ENCODE measurements at regions of chr5 and their contacts with region 1.

Region 1: GRCh38 chr5:75236322-75237316 is at the start of gene ANKRD31:
- DNase-seq: peak; percentile 91
- H3K4me3 ChIP-seq: peak within 1 kb of the TSS; percentile 29 to 75 (median 56)
- H3K27ac ChIP-seq: peak within 1 kb of the TSS; percentile 74 to 84 (median 78)
- H3K4me1 ChIP-seq: peaks cover 0 to 12% (median 2%) of the 10 kb centered on the region in 4 donors
- H3K27me3 ChIP-seq: no peaks in the 10 kb centered on the region
- CTCF ChIP-seq: peak; percentile 48 to 87 (median 77)
- EP300 ChIP-seq: no peak
- POLR2A ChIP-seq: peak; percentile 38
- total RNA-seq, gene ANKRD31: 0.16 TPM in 1 of 4 donors, not detected in the others

Region 2: GRCh38 chr5:75336625-75337339 is 100.2 kb after region 1 on chr5 and contains the start of gene HMGCR:
- in situ Hi-C with region 1: loop called in 2 of 4 experiments (anchors 10 to 25 kb)
- intact Hi-C with region 1: loop called (anchors 10 kb)
- DNase-seq: peak; percentile 99
- H3K4me3 ChIP-seq: peak within 1 kb of the TSS; percentile 70 to 92 (median 78)
- H3K27ac ChIP-seq: peak within 1 kb of the TSS; percentile 88 to 96 (median 93)
- H3K4me1 ChIP-seq: peaks cover 0 to 41% (median 12%) of the 10 kb centered on the region in 4 donors
- H3K27me3 ChIP-seq: no peaks in the 10 kb centered on the region
- CTCF ChIP-seq: peak in 3 of 5 experiments; percentile 5 to 57 (median 20)
- EP300 ChIP-seq: no peak
- POLR2A ChIP-seq: peak; percentile 95
- total RNA-seq, gene HMGCR: 44.9 to 205 (median 99.5) TPM

Region 3: DNA sequence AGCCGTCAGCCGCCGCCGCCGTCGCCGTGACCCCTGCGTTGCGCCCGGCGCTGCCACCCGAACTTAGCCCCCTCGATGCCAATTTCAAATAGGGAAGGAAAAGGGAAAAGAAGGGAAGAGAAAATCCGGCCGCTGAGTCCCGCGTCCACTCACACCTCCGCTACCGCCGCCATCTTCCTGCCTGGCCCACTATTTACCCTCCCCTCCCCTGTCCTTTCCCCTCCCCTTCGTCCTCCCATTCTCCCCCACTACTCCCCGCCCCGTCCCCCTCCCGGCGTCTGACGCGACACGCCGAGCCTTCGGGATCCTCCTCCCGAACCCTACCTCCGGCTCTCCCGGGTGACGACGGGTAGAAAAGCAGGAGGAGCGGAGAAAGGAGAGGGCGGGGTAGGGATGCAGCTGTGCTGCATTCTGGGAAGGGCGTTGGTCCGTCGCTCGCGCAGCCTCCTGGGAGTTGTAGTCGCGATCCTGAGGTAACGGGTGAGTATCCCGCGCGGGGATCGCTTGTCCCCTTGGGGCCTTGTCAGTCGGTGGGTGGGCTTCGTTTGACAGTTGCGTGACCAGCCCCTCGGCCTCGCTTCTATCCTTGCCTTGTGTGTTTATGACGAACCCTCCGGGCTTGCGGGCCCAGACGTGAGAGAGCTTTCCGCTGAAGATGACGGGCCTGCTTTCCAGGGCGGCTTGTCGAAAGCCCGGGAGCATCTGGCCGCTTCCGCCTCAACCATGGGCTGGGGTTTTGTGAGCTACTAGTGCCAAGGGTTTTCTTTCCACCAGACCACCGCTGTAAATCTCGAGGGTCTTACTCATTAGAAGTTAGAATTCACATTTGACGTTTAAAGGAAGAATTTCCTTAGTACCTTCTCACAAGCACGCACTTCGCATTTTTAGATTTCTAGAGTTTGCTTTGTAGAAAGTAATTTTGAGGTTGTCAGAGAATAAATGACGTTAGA is 275.1 kb after region 1 on chr5 and contains the starts of genes CERT1 and POLK:
- in situ Hi-C with region 1: loop called in 1 of 4 experiments (anchors 25 kb)
- intact Hi-C with region 1: no loop called
- DNase-seq: peak; percentile 98
- H3K4me3 ChIP-seq: peak within 1 kb of the TSS; percentile 64 to 82 (median 79)
- H3K27ac ChIP-seq: peak within 1 kb of the TSS; percentile 90 to 94 (median 94)
- H3K4me1 ChIP-seq: peaks cover 12 to 49% (median 18%) of the 10 kb centered on the region in 4 donors
- H3K27me3 ChIP-seq: no peaks in the 10 kb centered on the region
- CTCF ChIP-seq: no peak
- EP300 ChIP-seq: no peak
- POLR2A ChIP-seq: peak; percentile 95
- total RNA-seq, gene CERT1: 33.2 to 59.5 (median 39.4) TPM
- total RNA-seq, gene POLK: 5.4 to 30.2 (median 18.5) TPM

Region 4: DNA sequence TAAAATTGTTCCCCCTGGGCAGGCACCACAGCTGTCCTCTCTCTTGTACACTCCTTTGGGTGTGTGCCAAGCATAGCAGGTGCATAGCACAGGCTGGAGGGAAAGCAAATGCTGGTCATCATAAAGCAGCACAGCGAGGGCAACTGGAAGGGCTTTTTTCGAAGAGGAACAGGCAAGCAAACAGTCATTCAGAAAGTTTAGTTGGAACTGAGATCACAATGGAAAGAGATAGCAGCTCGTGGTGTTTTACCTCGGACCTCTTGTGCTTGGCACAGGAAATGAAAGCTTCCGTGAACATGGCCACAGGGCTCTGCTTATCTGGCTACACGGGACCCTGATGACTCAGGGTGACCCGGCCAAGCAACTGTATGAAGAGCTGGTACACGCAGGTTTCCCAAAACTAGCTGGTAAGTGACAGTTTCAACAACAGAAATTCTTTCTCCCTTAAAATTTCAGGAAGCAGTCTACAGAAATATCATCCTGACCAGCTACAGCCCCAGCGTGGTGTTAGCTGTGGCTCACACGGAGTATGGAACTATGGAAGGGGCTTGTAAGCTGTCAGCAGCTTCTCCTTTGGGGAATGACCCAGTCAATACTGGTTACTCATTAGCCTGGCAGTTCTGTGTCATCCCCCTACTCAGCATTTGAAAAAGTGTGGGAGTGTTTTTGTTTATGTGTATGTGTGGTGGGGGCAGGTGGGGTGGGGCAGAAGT is 432.5 kb after region 1 on chr5:
- in situ Hi-C with region 1: loop called in 1 of 4 experiments (anchors 25 kb)
- intact Hi-C with region 1: no loop called
- DNase-seq: peak; percentile 65
- H3K4me3 ChIP-seq: peak overlapping the region in 2 of 4 donors; percentile 18 to 34
- H3K27ac ChIP-seq: peak overlapping the region; percentile 29 to 68 (median 60)
- H3K4me1 ChIP-seq: peaks cover 0 to 15% (median 6%) of the 10 kb centered on the region in 4 donors
- H3K27me3 ChIP-seq: no peaks in the 10 kb centered on the region
- CTCF ChIP-seq: no peak
- EP300 ChIP-seq: no peak
- POLR2A ChIP-seq: no peak